Natural killer cell (primary cell): ENCODE measurements at regions of chr1 and their contacts with region 1.

Region 1: GRCh38 chr1:174262349-174263241 is 103.3 kb downstream of the RABGAP1L start:
- DNase-seq: peak in 1 of 2 donors; percentile 47
- ATAC-seq: peak; percentile 52 to 70 (median 61)
- H3K4me3 ChIP-seq: no peak overlapping the region
- H3K4me3 Mint-ChIP-seq: no peak overlapping the region
- H3K27ac ChIP-seq: no peak overlapping the region
- H3K27ac Mint-ChIP-seq: peak overlapping the region in 1 of 2 donors; percentile 65
- H3K4me1 ChIP-seq: no peaks in the 10 kb centered on the region
- H3K4me1 Mint-ChIP-seq: peaks cover 0 to 8% of the 10 kb centered on the region in 2 donors
- H3K27me3 ChIP-seq: no peaks in the 10 kb centered on the region
- H3K27me3 Mint-ChIP-seq: no peaks in the 10 kb centered on the region
- CTCF ChIP-seq: peak; percentile 58

Region 2: GRCh38 chr1:174074757-174075156 is 187.8 kb before region 1 on chr1:
- intact Hi-C with region 1: no loop called
- DNase-seq: peak in 1 of 2 donors; percentile 22
- ATAC-seq: no peak
- H3K4me3 ChIP-seq: no peak overlapping the region
- H3K4me3 Mint-ChIP-seq: no peak overlapping the region
- H3K27ac ChIP-seq: no peak overlapping the region
- H3K27ac Mint-ChIP-seq: no peak overlapping the region
- H3K4me1 ChIP-seq: no peaks in the 10 kb centered on the region
- H3K4me1 Mint-ChIP-seq: no peaks in the 10 kb centered on the region
- H3K27me3 ChIP-seq: no peaks in the 10 kb centered on the region
- H3K27me3 Mint-ChIP-seq: peaks cover 0 to 7% of the 10 kb centered on the region in 2 donors
- CTCF ChIP-seq: peak; percentile 27

Region 3: DNA sequence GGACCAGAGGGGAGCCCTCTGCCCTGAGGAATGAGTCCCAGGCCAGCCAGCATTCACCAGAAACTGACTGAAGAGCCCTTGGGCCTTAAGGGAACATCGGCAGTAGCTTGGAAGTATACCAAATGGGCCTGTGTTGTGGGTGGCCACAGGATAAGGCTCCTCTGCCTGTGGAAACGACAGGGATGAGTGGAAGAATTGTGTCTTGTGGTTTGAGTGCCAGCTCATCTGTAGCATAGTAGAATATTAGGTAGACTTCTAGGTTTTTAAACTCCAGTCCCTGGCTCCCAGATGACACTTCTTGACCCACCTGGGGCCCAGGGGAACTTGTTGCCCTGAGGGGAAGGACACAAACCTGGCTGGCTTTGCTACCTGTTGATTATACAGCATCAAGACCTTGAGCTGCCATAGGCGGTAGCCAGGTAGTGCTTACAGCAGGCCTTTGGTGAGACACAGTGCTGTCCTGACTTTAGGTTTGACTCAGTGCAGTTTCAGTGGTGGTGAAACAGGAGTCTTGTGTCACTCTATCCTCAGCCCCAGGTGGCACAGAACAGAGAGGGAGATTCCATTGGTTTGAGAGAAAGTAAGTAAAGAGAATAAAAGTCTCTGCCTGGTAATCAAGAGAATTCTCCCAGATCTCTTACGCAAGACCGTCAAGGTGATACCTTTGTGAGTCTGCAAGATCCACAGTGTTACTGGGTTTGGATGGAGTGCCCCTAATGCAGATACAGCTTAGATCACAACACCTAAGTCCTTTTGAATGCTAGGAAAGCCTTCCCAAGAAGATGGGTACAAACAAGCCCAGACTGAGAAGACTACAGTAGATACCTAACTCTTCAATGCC is 53.0 kb before region 1 on chr1:
- intact Hi-C with region 1: no loop called
- DNase-seq: no peak
- ATAC-seq: no peak
- H3K4me3 ChIP-seq: no peak overlapping the region
- H3K4me3 Mint-ChIP-seq: no peak overlapping the region
- H3K27ac ChIP-seq: no peak overlapping the region
- H3K27ac Mint-ChIP-seq: no peak overlapping the region
- H3K4me1 ChIP-seq: peaks cover under 1% of the 10 kb centered on the region
- H3K4me1 Mint-ChIP-seq: peaks cover 47 to 74% of the 10 kb centered on the region in 2 donors
- H3K27me3 ChIP-seq: no peaks in the 10 kb centered on the region
- H3K27me3 Mint-ChIP-seq: no peaks in the 10 kb centered on the region
- CTCF ChIP-seq: no peak

Region 4: GRCh38 chr1:174726167-174726879 is 463.7 kb after region 1 on chr1:
- intact Hi-C with region 1: loop called (anchors 2 kb)
- DNase-seq: peak in 1 of 2 donors; percentile 23
- ATAC-seq: no peak
- H3K4me3 ChIP-seq: no peak overlapping the region
- H3K4me3 Mint-ChIP-seq: no peak overlapping the region
- H3K27ac ChIP-seq: no peak overlapping the region
- H3K27ac Mint-ChIP-seq: no peak overlapping the region
- H3K4me1 ChIP-seq: no peaks in the 10 kb centered on the region
- H3K4me1 Mint-ChIP-seq: peaks cover under 1 to 5% of the 10 kb centered on the region in 2 donors
- H3K27me3 ChIP-seq: no peaks in the 10 kb centered on the region
- H3K27me3 Mint-ChIP-seq: no peaks in the 10 kb centered on the region
- CTCF ChIP-seq: peak; percentile 56

Region 5: GRCh38 chr1:174743654-174744561 is 481.3 kb after region 1 on chr1:
- intact Hi-C with region 1: loop called (anchors 1 kb)
- DNase-seq: peak in 1 of 2 donors; percentile 74
- ATAC-seq: peak; percentile 52 to 64 (median 55)
- H3K4me3 ChIP-seq: no peak overlapping the region
- H3K4me3 Mint-ChIP-seq: no peak overlapping the region
- H3K27ac ChIP-seq: no peak overlapping the region
- H3K27ac Mint-ChIP-seq: no peak overlapping the region
- H3K4me1 ChIP-seq: no peaks in the 10 kb centered on the region
- H3K4me1 Mint-ChIP-seq: peaks cover 5 to 7% of the 10 kb centered on the region in 2 donors
- H3K27me3 ChIP-seq: no peaks in the 10 kb centered on the region
- H3K27me3 Mint-ChIP-seq: no peaks in the 10 kb centered on the region
- CTCF ChIP-seq: peak; percentile 71

Region 6: GRCh38 chr1:174982971-174983689 is 720.5 kb after region 1 on chr1:
- intact Hi-C with region 1: loop called (anchors 10 kb)
- DNase-seq: peak in 1 of 2 donors; percentile 82
- ATAC-seq: peak; percentile 37 to 62 (median 41)
- H3K4me3 ChIP-seq: no peak overlapping the region
- H3K4me3 Mint-ChIP-seq: no peak overlapping the region
- H3K27ac ChIP-seq: no peak overlapping the region
- H3K27ac Mint-ChIP-seq: peak overlapping the region; percentile 53 to 58
- H3K4me1 ChIP-seq: peaks cover 3% of the 10 kb centered on the region
- H3K4me1 Mint-ChIP-seq: peaks cover 9 to 14% of the 10 kb centered on the region in 2 donors
- H3K27me3 ChIP-seq: no peaks in the 10 kb centered on the region
- H3K27me3 Mint-ChIP-seq: no peaks in the 10 kb centered on the region
- CTCF ChIP-seq: peak; percentile 78

Region 7: DNA sequence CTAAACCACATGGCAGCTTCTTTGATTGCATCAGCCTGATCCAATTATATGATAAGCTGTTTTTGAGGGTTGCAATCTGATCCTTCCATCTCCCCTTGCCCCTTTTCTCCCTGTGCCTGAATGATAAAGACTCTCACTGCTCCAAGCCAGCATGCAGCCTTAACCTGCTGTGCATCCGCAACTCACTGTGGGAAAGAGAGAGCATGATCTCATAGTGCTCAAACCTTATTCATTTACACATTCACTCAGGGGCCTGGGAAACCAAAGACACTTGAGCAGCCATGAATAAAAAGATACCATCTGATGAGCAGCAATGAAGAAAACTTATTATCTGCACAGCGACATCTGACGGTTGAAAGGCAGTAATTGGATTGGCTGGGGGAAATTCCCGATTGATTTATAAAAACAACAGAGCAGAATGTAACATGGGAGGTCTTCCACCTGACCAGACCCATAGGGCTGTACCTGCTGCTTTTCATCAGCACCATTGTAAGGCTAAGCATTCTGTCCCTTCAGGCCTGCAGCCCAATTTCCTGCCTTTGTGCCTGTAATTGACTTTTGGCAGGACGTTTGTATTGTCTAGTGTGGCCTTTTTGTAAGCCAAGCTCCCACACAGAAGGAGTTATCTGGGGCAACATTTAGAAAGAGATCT is 867.5 kb after region 1 on chr1:
- intact Hi-C with region 1: loop called (anchors 5 kb)
- DNase-seq: no peak
- ATAC-seq: peak in 1 of 3 donors; percentile 45
- H3K4me3 ChIP-seq: no peak overlapping the region
- H3K4me3 Mint-ChIP-seq: no peak overlapping the region
- H3K27ac ChIP-seq: no peak overlapping the region
- H3K27ac Mint-ChIP-seq: no peak overlapping the region
- H3K4me1 ChIP-seq: peaks cover 3% of the 10 kb centered on the region
- H3K4me1 Mint-ChIP-seq: peaks cover 0 to 5% of the 10 kb centered on the region in 2 donors
- H3K27me3 ChIP-seq: no peaks in the 10 kb centered on the region
- H3K27me3 Mint-ChIP-seq: peaks cover 0 to 13% of the 10 kb centered on the region in 2 donors
- CTCF ChIP-seq: no peak